Activated CD4-positive, alpha-beta memory T cell treated with anti-CD3 and anti-CD28 coated beads for 36 hours (primary cell): ENCODE measurements at regions of chr21 and their contacts with region 1.

Region 1: DNA sequence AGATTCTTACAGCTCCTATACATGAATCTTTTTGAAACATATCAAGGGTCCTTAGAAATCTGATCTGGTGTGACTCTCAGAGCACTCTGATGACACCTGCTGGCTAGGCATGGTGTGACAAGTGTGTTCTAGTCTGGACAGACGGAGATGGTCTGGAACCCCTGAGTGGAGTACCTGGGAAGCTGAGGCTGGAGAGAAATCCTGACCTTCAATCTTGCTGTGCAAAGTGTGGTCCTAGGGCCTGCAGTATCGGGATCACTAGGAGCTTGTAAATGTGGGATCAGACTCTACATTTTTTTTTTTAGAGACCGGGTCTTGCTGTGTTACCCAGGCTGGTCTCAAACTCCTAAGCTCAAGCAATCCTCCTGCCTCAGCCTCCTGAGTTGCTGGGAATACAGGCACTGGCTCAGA is 78.6 kb upstream of the SOD1 start:
- DNase-seq: peak; percentile 84
- H3K4me3 Mint-ChIP-seq: no peak overlapping the region
- H3K27ac Mint-ChIP-seq: no peak overlapping the region
- H3K4me1 Mint-ChIP-seq: peaks cover 4% of the 10 kb centered on the region
- H3K27me3 Mint-ChIP-seq: peaks cover 3% of the 10 kb centered on the region

Region 2: DNA sequence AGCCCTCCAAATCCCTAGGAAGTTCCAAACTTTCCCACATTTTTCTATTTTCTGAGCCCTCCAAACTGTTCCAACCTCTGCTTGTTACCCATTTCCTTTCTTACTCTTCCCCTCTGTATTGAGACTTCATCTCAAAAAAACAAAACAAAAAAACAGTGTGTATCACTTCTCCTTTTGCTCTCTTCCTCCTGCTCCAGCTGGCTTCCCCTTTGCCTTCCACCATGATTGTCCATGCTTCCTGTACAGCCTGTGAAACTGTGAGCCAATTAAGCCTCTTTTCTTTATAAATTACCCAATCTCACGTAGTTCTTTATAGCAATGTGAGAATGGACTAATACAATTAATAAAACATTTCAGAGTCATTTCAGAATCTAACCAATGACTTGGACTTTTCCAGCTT is 473.0 kb before region 1 on chr21:
- CTCF ChIA-PET with region 1: interaction called, 45 read pairs
- POLR2A ChIA-PET with region 1: no interaction called
- intact Hi-C with region 1: no loop called
- DNase-seq: no peak
- H3K4me3 Mint-ChIP-seq: no peak overlapping the region
- H3K27ac Mint-ChIP-seq: no peak overlapping the region
- H3K4me1 Mint-ChIP-seq: peaks cover 32% of the 10 kb centered on the region
- H3K27me3 Mint-ChIP-seq: no peaks in the 10 kb centered on the region

Region 3: GRCh38 chr21:31213795-31214194 is 367.1 kb before region 1 on chr21:
- CTCF ChIA-PET with region 1: interaction called, 14 read pairs
- POLR2A ChIA-PET with region 1: no interaction called
- intact Hi-C with region 1: no loop called
- DNase-seq: no peak
- H3K4me3 Mint-ChIP-seq: no peak overlapping the region
- H3K27ac Mint-ChIP-seq: no peak overlapping the region
- H3K4me1 Mint-ChIP-seq: no peaks in the 10 kb centered on the region
- H3K27me3 Mint-ChIP-seq: no peaks in the 10 kb centered on the region

Region 4: GRCh38 chr21:31470896-31471694 is 109.8 kb before region 1 on chr21:
- CTCF ChIA-PET with region 1: no interaction called
- POLR2A ChIA-PET with region 1: no interaction called
- intact Hi-C with region 1: no loop called
- DNase-seq: no peak
- H3K4me3 Mint-ChIP-seq: no peak overlapping the region
- H3K27ac Mint-ChIP-seq: no peak overlapping the region
- H3K4me1 Mint-ChIP-seq: no peaks in the 10 kb centered on the region
- H3K27me3 Mint-ChIP-seq: no peaks in the 10 kb centered on the region

Region 5: DNA sequence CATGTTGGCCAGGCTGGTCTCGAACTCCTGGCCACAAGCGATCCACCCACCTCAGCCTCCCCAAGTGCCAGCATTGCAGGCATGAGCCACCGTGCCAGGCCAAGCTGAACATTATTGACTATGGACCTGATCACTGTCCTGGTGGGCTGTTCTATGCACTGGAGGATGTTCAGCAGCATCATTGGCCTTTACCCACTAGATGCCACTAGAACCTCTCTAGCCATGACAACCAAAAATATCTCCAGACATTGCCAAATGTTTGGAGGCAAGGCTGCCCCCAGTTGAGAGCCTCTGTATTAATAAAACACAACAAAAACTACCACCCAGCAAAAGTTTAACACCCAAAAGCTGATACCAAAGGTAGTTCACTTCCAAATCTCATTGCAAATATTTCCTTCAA is 32.2 kb before region 1 on chr21:
- CTCF ChIA-PET with region 1: interaction called, 6 read pairs
- POLR2A ChIA-PET with region 1: no interaction called
- intact Hi-C with region 1: loop called (anchors 5 kb)
- DNase-seq: no peak
- H3K4me3 Mint-ChIP-seq: no peak overlapping the region
- H3K27ac Mint-ChIP-seq: no peak overlapping the region
- H3K4me1 Mint-ChIP-seq: peaks cover 8% of the 10 kb centered on the region
- H3K27me3 Mint-ChIP-seq: peaks cover 1% of the 10 kb centered on the region